ENCODE measurements at regions of chr11 and their contacts with region 1.

Region 1: GRCh38 chr11:10387206-10388083 is 67.6 kb upstream of the AMPD3 start:
- DNase-seq: peak; percentile 96
- H3K4me3 ChIP-seq: no peak overlapping the region
- H3K27me3 ChIP-seq: no peaks in the 10 kb centered on the region
- CTCF ChIP-seq: no peak

Region 2: GRCh38 chr11:10108915-10109680 is 278.3 kb before region 1 on chr11:
- CTCF ChIA-PET with region 1: no interaction called
- POLR2A ChIA-PET with region 1: no interaction called
- DNase-seq: no peak
- H3K4me3 ChIP-seq: no peak overlapping the region
- H3K27me3 ChIP-seq: no peaks in the 10 kb centered on the region
- CTCF ChIP-seq: no peak

Region 3: GRCh38 chr11:10255388-10256125 is 131.9 kb before region 1 on chr11:
- CTCF ChIA-PET with region 1: no interaction called
- POLR2A ChIA-PET with region 1: no interaction called
- DNase-seq: no peak
- H3K4me3 ChIP-seq: no peak overlapping the region
- H3K27me3 ChIP-seq: no peaks in the 10 kb centered on the region
- CTCF ChIP-seq: no peak

Region 4: DNA sequence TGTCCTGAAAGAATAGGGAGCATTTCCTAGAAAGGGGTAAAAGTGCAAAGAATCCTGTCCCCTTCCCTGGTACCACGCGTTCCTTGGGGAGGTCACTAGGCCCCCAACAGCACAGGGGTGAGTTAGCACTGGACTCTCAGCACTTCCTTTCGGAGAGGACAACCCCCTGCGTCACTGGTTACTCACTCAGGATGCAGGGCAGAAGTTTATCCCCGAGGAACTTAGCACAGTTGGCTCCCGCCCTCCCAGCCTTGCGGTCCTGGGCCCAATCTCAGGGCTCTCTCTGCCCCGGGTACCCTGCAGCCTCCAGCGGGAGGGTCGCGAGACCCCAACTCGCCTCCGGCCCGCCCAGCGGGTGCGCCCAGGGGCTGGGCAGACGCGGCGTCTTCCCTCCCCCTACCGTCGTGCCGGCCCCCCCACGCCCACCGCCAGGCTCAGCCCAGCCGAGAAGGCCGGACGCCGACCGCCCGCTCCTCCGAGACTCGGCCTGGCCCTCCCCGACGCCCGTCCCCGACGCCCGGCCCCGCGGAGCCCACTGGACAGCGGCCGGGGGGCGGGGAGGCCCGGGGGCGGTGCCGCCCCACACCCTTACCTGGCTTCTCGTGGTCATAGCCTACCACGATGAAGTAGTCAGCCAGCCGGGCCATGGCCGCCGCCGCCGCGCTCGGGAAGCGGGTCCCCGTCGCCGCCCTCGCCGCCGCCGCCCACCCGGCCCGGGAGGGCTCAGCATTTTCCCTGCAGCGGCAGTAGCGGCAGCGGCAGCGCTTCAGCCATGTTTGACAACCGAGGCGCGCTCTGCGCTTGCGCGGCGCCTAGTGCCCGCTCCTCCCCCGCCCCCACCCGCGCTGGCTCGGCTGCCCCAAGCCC is 93.8 kb before region 1 on chr11 and contains the start of gene SBF2:
- CTCF ChIA-PET with region 1: no interaction called
- POLR2A ChIA-PET with region 1: no interaction called
- DNase-seq: peak; percentile 44
- H3K4me3 ChIP-seq: peak within 1 kb of the TSS; percentile 61
- H3K27me3 ChIP-seq: no peaks in the 10 kb centered on the region
- CTCF ChIP-seq: no peak
- polyA plus RNA-seq, gene SBF2: 33.8 and 41.2 TPM in 2 replicates

Region 5: GRCh38 chr11:10351768-10352641 is 35.4 kb before region 1 on chr11:
- CTCF ChIA-PET with region 1: no interaction called
- POLR2A ChIA-PET with region 1: interaction called, 15 read pairs
- DNase-seq: peak; percentile 62
- H3K4me3 ChIP-seq: no peak overlapping the region
- H3K27me3 ChIP-seq: no peaks in the 10 kb centered on the region
- CTCF ChIP-seq: no peak